ENCODE measurements at regions of chr18 and their contacts with region 1.

Region 1: GRCh38 chr18:34661464-34662111 is 48.5 kb upstream of the DTNA start:
- DNase-seq: no peak
- H3K4me3 Mint-ChIP-seq: no peak overlapping the region
- H3K27ac Mint-ChIP-seq: no peak overlapping the region
- H3K4me1 Mint-ChIP-seq: no peaks in the 10 kb centered on the region
- H3K27me3 Mint-ChIP-seq: peaks cover 6% of the 10 kb centered on the region

Region 2: GRCh38 chr18:34650121-34650545 is 11.5 kb before region 1 on chr18:
- CTCF ChIA-PET with region 1: interaction called, 24 read pairs
- DNase-seq: no peak
- H3K4me3 Mint-ChIP-seq: no peak overlapping the region
- H3K27ac Mint-ChIP-seq: no peak overlapping the region
- H3K4me1 Mint-ChIP-seq: no peaks in the 10 kb centered on the region
- H3K27me3 Mint-ChIP-seq: no peaks in the 10 kb centered on the region

Region 3: GRCh38 chr18:34787931-34788532 is 126.4 kb after region 1 on chr18:
- CTCF ChIA-PET with region 1: interaction called, 31 read pairs
- DNase-seq: peak; percentile 39
- H3K4me3 Mint-ChIP-seq: no peak overlapping the region
- H3K27ac Mint-ChIP-seq: no peak overlapping the region
- H3K4me1 Mint-ChIP-seq: no peaks in the 10 kb centered on the region
- H3K27me3 Mint-ChIP-seq: peaks cover 3% of the 10 kb centered on the region